ENCODE measurements at regions of chr15 and their contacts with region 1.

Region 1: DNA sequence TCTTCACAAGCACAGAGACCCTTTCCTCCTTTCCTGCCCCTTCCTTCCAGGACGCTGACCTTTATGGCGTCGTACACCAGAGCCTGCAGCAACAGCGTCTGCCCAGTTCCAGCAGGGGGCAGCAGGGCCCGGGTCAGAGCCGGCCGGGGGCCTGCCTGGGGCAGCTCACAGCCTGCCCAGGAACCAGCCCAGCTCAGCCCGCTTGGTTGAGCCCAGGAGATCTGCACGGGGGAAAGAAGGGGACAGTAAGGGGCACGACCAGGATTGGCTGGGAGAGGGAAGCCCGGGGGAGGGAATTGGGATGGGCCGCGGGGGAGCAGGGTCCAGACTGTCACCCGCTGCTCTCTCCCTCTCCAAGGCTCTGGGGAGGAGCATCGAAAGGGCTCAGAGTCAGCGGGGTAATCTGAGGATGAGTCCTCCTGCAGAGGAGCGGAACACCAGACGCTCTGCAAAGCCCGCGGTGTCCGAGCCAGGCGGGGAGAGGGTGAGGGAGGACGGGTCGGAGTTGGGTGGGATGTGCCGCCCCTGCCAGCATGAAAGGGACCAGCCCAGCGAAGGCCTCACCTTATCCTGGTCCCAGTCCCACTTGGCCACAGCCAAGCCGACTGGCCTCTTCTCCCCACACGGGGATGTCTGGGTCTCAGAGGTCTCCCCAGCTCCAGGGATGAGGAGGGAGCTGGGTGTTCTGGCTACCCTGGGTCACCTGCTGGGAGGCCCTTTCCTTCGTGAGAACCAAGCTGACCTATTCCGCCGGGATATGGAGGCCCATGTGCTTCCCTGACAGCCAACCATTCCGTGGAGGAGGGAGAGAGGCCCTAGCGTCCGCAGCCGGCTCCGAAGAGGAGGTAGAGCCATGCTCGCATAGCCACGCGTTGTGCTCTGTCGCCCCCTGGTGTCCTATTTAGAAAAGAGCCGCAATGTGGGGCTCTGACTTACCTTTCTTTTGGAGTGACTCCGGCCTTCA is 7.4 kb upstream of the IGDCC3 start:
- DNase-seq: peak; percentile 91
- ATAC-seq: peak; percentile 87
- H3K4me3 Mint-ChIP-seq: peak overlapping the region; percentile 85
- H3K27ac Mint-ChIP-seq: peak overlapping the region; percentile 81
- H3K4me1 Mint-ChIP-seq: peaks cover 8% of the 10 kb centered on the region
- H3K27me3 Mint-ChIP-seq: peaks cover 8% of the 10 kb centered on the region
- CTCF ChIP-seq: peak; percentile 75

Region 2: DNA sequence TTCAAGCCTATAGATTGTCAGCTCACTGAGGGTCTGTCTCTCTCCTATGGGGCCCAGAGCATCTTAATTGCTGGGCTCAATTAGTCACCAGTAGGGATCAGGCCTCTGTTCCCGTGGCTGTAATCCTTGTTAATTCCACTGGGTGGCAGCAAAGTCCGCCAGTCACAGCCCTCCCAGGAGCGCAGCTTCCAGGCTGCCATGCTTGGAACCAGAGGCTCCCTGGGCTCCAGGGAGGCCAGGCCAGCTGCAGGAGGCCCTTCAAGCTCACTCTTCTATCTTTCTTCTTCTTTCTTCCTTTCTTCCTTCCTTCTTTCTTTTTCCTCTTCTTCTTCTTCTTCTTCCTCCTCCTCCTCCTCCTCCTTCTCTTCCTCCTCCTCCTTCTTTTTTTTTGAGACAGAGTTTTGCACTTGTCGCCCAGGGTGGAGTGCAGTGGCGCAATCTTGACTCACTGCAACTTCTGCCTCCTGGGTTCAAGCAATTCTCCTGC is 66.3 kb before region 1 on chr15:
- CTCF ChIA-PET with region 1: interaction called, 211 read pairs
- POLR2A ChIA-PET with region 1: interaction called, 4 read pairs
- intact Hi-C with region 1: loop called (anchors 1 kb)
- DNase-seq: peak; percentile 84
- ATAC-seq: peak; percentile 100
- H3K4me3 Mint-ChIP-seq: no peak overlapping the region
- H3K27ac Mint-ChIP-seq: no peak overlapping the region
- H3K4me1 Mint-ChIP-seq: no peaks in the 10 kb centered on the region
- H3K27me3 Mint-ChIP-seq: peaks cover 7% of the 10 kb centered on the region
- CTCF ChIP-seq: peak; percentile 89

Region 3: GRCh38 chr15:65368302-65369211 is 16.6 kb before region 1 on chr15:
- CTCF ChIA-PET with region 1: interaction called, 50 read pairs
- POLR2A ChIA-PET with region 1: interaction called, 3 read pairs
- intact Hi-C with region 1: no loop called
- DNase-seq: no peak
- ATAC-seq: no peak
- H3K4me3 Mint-ChIP-seq: no peak overlapping the region
- H3K27ac Mint-ChIP-seq: no peak overlapping the region
- H3K4me1 Mint-ChIP-seq: no peaks in the 10 kb centered on the region
- H3K27me3 Mint-ChIP-seq: peaks cover 5% of the 10 kb centered on the region
- CTCF ChIP-seq: no peak

Region 4: GRCh38 chr15:65395567-65396185 is 10.5 kb after region 1 on chr15:
- CTCF ChIA-PET with region 1: interaction called, 21 read pairs
- POLR2A ChIA-PET with region 1: interaction called, 3 read pairs
- intact Hi-C with region 1: no loop called
- DNase-seq: no peak
- ATAC-seq: peak; percentile 55
- H3K4me3 Mint-ChIP-seq: no peak overlapping the region
- H3K27ac Mint-ChIP-seq: no peak overlapping the region
- H3K4me1 Mint-ChIP-seq: peaks cover 5% of the 10 kb centered on the region
- H3K27me3 Mint-ChIP-seq: peaks cover 52% of the 10 kb centered on the region
- CTCF ChIP-seq: peak; percentile 23

Region 5: DNA sequence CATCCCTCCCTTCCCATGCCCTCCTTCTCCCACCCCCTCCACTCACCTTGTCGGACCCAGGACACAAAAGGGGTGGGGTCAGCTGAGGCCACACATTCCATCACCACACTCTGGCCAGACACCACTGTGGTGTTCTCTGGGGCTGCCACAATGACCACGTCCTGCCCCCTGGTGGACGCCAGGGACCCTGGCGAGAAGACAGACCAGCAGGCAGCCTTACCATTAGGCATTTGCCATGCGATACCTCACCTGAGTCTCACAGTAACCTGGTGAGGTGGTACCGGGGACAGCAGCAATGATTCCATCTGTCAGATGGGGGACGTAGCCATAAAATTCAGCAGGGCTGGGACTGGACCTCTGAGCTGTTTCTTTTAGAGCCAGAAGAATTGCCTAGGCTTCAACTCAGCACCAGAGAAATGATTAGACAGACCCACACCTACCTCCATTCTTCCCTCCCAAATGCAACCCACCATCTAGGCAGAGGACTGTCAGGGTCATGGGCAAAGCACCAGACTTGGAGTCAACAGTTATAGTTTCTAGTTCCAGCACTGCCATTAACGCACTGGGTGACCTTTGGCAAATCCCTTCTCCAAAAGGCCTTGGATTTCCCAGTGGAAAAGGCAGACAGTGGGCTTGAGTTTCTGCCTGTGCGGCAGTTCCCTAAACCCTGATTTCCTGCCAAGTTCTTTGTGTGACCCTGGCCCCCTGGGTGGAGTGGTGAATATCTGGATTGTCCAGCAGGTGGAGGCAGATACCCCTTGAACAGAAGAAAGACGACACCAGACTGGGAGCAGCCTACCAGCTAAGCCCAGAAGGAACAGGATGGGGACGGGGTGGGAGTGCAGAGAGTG is 15.8 kb after region 1 on chr15:
- CTCF ChIA-PET with region 1: interaction called, 12 read pairs
- POLR2A ChIA-PET with region 1: no interaction called
- intact Hi-C with region 1: no loop called
- DNase-seq: peak; percentile 68
- ATAC-seq: peak; percentile 82
- H3K4me3 Mint-ChIP-seq: no peak overlapping the region
- H3K27ac Mint-ChIP-seq: no peak overlapping the region
- H3K4me1 Mint-ChIP-seq: peaks cover 5% of the 10 kb centered on the region
- H3K27me3 Mint-ChIP-seq: peaks cover 39% of the 10 kb centered on the region
- CTCF ChIP-seq: peak; percentile 54

Region 6: GRCh38 chr15:65466901-65467300 is 81.7 kb after region 1 on chr15:
- CTCF ChIA-PET with region 1: no interaction called
- POLR2A ChIA-PET with region 1: no interaction called
- intact Hi-C with region 1: no loop called
- DNase-seq: no peak
- ATAC-seq: no peak
- H3K4me3 Mint-ChIP-seq: no peak overlapping the region
- H3K27ac Mint-ChIP-seq: no peak overlapping the region
- H3K4me1 Mint-ChIP-seq: peaks cover 2% of the 10 kb centered on the region
- H3K27me3 Mint-ChIP-seq: no peaks in the 10 kb centered on the region
- CTCF ChIP-seq: no peak

Measured in activated CD8-positive, alpha-beta T cell treated with anti-CD3 and anti-CD28 coated beads for 36 hours (primary cell).